ENCODE measurements at regions of chr16 and their contacts with region 1.

Region 1: DNA sequence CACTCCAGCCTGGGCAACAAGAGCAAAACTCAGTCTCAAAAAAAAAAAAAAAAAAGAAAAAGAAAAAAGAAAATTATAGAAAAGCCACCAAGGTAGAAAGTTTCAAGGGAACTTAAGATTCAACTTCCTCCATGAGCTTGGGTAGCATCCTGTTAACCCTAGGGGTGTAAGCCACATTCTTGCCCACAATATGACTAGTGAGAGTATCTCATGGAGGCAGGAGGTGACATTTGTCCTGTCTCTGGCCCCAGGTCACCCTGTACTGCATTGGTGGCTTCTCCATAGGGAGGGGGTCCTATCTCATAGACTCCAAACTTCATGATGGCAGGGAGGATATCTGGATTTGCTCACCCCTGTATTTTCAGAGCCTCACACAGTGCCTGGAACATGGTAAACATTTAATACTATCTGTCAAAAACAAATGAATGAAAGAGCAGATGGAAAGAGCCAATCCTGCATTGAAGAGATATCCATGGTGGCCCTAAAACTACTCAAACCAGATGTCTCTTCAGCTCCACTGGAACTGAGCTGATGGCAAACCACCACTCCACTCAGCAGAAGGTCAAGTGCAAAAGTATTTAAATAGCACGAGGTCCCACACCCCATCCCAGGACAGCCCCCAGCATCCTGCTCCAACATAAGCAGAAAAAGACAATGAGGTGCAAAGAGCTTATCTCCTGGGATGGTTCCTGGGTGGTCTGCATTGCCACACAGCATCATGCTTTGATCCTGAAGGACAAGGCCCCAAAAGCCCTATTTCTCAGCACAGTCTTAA is 50.3 kb downstream of the EMP2 start:
- DNase-seq: no peak
- ATAC-seq: no peak
- H3K4me3 ChIP-seq: no peak overlapping the region
- H3K27ac ChIP-seq: no peak overlapping the region
- H3K4me1 ChIP-seq: no peaks in the 10 kb centered on the region
- H3K27me3 ChIP-seq: no peaks in the 10 kb centered on the region
- CTCF ChIP-seq: no peak
- POLR2A ChIP-seq: no peak

Region 2: DNA sequence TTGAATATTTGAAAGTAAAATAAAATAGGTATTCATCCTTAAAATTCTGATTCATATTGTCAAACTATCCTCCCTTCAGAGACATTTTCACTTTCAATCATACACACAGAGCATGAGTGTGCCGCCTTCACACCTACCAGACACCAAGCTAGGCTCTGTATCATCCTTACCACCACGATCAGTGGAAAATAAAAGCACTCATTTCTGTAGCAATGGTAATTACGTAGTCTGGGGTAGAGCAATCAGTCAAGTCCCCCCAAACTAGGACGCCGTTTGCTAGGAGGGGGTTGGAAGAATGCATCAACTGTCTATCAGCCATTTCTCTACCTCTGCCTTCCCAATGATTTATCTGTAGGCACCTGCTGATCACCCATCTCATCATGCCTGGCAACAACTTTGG is 263.3 kb before region 1 on chr16:
- intact Hi-C with region 1: no loop called
- DNase-seq: no peak
- ATAC-seq: no peak
- H3K4me3 ChIP-seq: no peak overlapping the region
- H3K27ac ChIP-seq: no peak overlapping the region
- H3K4me1 ChIP-seq: no peaks in the 10 kb centered on the region
- H3K27me3 ChIP-seq: no peaks in the 10 kb centered on the region
- CTCF ChIP-seq: no peak
- POLR2A ChIP-seq: no peak

Region 3: GRCh38 chr16:10729104-10730048 is 199.3 kb after region 1 on chr16:
- intact Hi-C with region 1: loop called (anchors 5 kb)
- DNase-seq: no peak
- ATAC-seq: no peak
- H3K4me3 ChIP-seq: no peak overlapping the region
- H3K27ac ChIP-seq: no peak overlapping the region
- H3K4me1 ChIP-seq: no peaks in the 10 kb centered on the region
- H3K27me3 ChIP-seq: no peaks in the 10 kb centered on the region
- CTCF ChIP-seq: no peak
- POLR2A ChIP-seq: no peak